ENCODE measurements at regions of chr3 and their contacts with region 1.

Region 1: DNA sequence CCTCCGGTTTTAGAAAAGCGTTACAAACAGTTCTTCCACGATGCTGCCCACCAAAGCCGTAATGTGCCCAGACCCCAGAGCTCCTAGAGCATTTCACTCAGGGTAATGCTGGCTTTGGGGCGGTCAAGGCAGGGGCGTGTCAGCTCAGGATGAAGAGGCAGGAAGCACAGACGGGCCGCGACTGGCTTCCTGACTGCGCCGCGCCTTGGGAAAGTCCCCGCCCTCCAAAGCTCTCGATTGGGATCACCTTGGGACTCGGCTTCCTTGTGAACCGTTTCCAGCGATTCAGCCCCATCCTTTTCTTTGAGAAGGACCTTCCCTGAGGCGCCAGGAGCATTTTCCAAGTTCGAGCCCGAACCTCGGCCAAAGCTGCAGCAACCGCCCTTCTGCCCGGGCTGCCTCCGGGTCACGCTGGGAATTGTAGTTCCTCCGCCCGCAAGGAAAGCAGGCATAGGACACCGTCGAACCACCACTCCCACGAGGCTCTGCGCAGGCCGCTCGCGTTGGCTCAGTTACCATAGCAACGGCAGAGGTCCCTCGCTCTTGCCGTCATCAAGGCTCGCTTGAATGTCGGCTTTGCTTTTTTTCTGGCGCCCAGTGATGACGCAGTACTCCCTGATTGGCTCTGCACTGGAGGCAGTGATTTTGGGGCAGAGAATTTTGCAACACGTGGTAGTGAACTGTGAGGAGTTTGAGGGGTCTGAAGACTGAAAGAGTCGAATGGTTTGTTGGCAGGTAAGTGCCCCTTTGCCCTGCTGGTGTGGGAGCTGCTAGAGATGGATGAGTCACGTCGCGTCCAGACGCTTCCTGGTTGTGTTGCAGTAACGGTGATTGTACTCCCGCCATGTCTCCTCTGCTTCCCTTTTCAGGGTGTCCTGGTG is at the starts of genes CCDC191 and QTRT2:
- DNase-seq: peak; percentile 98
- H3K4me3 ChIP-seq: peak within 1 kb of the TSS; percentile 85
- H3K27ac ChIP-seq: peak within 1 kb of the TSS; percentile 66
- H3K4me1 ChIP-seq: peaks cover 25% of the 10 kb centered on the region
- H3K27me3 ChIP-seq: no peaks in the 10 kb centered on the region
- CTCF ChIP-seq: no peak
- total RNA-seq, gene CCDC191: 11.0 and 13.2 TPM in 2 replicates
- total RNA-seq, gene QTRT2: 30.4 and 33.4 TPM in 2 replicates

Region 2: DNA sequence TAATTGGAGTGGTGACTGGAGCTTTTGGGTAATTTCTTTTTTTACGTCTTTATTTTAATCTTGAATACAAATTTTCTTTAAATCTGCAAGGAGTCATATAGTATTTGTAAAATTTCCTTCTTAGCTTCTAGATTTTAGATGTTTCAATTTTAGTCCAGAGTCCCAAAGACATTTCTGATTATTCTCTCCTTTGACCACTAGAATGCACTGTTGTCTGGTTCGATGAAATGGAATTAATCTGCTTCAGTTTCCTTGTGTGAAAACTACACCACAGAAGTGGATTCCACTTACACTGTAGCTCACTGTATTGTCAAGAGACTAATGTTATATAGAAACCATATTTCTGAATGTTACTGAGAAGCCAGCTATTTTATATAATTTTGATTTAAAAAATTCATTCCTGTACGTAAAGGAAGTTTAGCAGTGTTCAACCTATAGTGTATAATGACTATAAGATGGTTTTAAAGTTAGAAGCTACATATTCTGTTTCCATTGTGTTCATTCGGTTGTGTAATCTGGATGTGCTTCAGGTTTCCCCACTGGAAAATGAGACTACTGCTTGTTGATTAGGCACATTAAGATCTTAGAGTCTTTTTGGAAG is 211.6 kb before region 1 on chr3:
- CTCF ChIA-PET with region 1: interaction called, 5 read pairs
- POLR2A ChIA-PET with region 1: no interaction called
- intact Hi-C with region 1: loop called (anchors 5 kb)
- DNase-seq: peak in 1 of 2 experiments; percentile 42
- H3K4me3 ChIP-seq: no peak overlapping the region
- H3K27ac ChIP-seq: no peak overlapping the region
- H3K4me1 ChIP-seq: peaks cover 23% of the 10 kb centered on the region
- H3K27me3 ChIP-seq: no peaks in the 10 kb centered on the region
- CTCF ChIP-seq: peak; percentile 68

Region 3: GRCh38 chr3:113947372-113948014 is 108.9 kb before region 1 on chr3 and contains the start of gene ZDHHC23:
- CTCF ChIA-PET with region 1: no interaction called
- POLR2A ChIA-PET with region 1: no interaction called
- intact Hi-C with region 1: loop called (anchors 2 kb)
- DNase-seq: peak; percentile 50 to 94
- H3K4me3 ChIP-seq: peak within 1 kb of the TSS; percentile 82
- H3K27ac ChIP-seq: no peak within 1 kb of the TSS
- H3K4me1 ChIP-seq: peaks cover 7% of the 10 kb centered on the region
- H3K27me3 ChIP-seq: no peaks in the 10 kb centered on the region
- CTCF ChIP-seq: no peak
- total RNA-seq, gene ZDHHC23: 17.5 and 20.9 TPM in 2 replicates

Region 4: DNA sequence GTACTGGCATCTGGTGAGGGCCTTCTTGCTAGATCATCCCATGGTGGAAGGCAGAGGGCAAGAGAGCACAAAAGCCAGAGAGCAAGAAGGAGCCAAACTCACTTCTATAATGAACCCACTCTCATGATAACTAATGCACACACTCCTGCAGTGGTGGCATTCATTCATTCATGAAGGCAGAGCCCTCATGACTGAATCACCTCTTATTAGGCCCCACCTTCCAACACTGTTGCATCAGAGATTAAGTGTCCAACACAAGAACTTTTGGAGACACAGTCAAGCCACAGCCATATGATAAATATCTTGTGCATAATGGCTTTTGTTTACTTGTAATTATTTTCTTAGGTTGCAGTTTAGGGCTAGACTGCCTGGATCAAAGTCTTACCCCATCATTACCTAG is 420.1 kb after region 1 on chr3:
- CTCF ChIA-PET with region 1: no interaction called
- POLR2A ChIA-PET with region 1: no interaction called
- intact Hi-C with region 1: no loop called
- DNase-seq: no peak
- H3K4me3 ChIP-seq: no peak overlapping the region
- H3K27ac ChIP-seq: no peak overlapping the region
- H3K4me1 ChIP-seq: peaks cover 7% of the 10 kb centered on the region; the same call in 1 of the 2 replicates
- H3K27me3 ChIP-seq: no peaks in the 10 kb centered on the region
- CTCF ChIP-seq: no peak

Region 5: DNA sequence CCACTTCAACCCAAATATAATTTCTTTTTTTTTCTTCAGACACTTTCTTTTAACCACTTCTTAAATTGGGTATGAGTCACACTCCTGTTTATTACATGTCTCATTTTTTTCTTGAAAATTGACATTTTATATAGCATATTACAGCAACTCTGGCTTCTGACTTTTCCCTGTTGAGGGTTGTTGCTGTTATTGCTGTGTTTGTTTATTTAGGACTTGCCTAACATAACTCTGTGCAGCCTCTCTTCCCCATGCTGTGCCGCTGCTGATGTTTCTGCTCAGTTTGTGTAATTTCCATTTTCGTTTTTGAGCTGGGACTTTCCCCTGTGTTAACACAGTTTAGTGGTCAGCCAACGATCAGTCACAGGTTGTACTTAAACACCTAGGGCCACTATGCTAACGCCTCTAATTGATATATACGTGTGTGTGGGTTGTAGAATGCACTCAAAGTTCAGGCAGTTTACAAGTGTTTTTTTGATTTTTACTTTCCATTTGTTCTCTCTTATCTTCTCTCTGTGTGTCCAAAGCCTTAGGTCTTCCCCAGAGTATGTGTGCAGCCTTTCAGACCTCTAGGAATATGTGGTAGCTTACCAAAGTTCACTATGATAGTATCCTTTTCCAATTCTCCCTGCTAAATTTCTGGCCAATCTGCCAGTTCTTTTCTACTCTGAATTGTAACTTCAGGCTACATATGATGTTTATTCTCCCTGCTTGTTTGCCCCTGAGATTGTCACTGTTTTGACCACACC is 753.5 kb after region 1 on chr3:
- CTCF ChIA-PET with region 1: no interaction called
- POLR2A ChIA-PET with region 1: no interaction called
- intact Hi-C with region 1: no loop called
- DNase-seq: no peak
- H3K4me3 ChIP-seq: no peak overlapping the region
- H3K27ac ChIP-seq: no peak overlapping the region
- H3K4me1 ChIP-seq: no peaks in the 10 kb centered on the region
- H3K27me3 ChIP-seq: no peaks in the 10 kb centered on the region
- CTCF ChIP-seq: no peak

Region 6: GRCh38 chr3:115790759-115791158 is 1734.4 kb after region 1 on chr3:
- CTCF ChIA-PET with region 1: no interaction called
- POLR2A ChIA-PET with region 1: no interaction called
- intact Hi-C with region 1: loop called (anchors 10 kb)
- DNase-seq: peak; percentile 79 to 91
- H3K4me3 ChIP-seq: peak overlapping the region; percentile 5; the same call in 1 of the 2 replicates
- H3K27ac ChIP-seq: peak overlapping the region; percentile 89
- H3K4me1 ChIP-seq: peaks cover 54% of the 10 kb centered on the region
- H3K27me3 ChIP-seq: no peaks in the 10 kb centered on the region
- CTCF ChIP-seq: no peak